HCT116 (cell line): ENCODE measurements at regions of chr11 and their contacts with region 1.

Region 1: DNA sequence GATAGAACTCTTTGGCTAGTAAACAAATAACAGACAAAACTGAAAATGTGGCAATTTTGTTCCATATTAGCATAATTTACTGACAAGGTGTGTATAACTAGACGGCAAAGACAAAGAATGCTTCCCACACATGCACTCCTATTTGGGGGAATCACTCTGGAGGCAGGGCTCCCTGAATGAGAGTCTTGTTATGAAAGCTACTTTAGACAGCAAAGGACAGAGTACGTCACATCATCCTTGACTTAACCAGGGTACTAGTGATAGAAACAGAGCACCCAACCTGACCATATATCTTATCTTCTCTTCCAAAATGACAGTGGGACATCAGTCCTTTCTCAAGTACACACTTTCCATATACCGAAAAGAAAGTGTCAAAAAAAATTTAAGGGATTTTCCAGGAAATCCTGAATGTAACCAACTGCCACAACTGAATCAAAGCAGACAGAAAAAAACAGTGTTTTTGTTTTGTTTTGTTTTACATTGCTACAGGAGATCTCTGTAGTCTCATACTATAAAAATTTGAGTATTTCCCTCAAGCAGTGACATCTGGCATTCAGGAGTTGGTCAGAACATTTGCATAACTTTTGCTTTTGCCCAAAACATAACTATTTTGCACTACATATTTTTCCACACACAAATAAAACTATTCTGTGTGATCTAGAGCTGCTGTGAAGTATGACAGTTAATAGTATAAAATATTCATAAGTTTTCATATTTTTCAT is 98.9 kb downstream of the ARHGAP20 start:
- DNase-seq: no peak
- ATAC-seq: no peak
- H3K4me3 ChIP-seq: no peak overlapping the region
- H3K27ac ChIP-seq: no peak overlapping the region
- H3K4me1 ChIP-seq: no peaks in the 10 kb centered on the region
- H3K27me3 ChIP-seq: peaks cover 26% of the 10 kb centered on the region
- CTCF ChIP-seq: no peak
- POLR2A ChIP-seq: no peak
- RAD21 ChIP-seq: no peak

Region 2: GRCh38 chr11:110891411-110891810 is 278.1 kb after region 1 on chr11:
- CTCF ChIA-PET with region 1: no interaction called
- POLR2A ChIA-PET with region 1: no interaction called
- RAD21 ChIA-PET with region 1: no interaction called
- intact Hi-C with region 1: loop called (anchors 5 kb)
- DNase-seq: no peak
- ATAC-seq: no peak
- H3K4me3 ChIP-seq: no peak overlapping the region
- H3K27ac ChIP-seq: no peak overlapping the region
- H3K4me1 ChIP-seq: no peaks in the 10 kb centered on the region
- H3K27me3 ChIP-seq: no peaks in the 10 kb centered on the region
- CTCF ChIP-seq: no peak
- POLR2A ChIP-seq: no peak
- RAD21 ChIP-seq: no peak